ENCODE measurements at regions of chr6 and their contacts with region 1.

Region 1: DNA sequence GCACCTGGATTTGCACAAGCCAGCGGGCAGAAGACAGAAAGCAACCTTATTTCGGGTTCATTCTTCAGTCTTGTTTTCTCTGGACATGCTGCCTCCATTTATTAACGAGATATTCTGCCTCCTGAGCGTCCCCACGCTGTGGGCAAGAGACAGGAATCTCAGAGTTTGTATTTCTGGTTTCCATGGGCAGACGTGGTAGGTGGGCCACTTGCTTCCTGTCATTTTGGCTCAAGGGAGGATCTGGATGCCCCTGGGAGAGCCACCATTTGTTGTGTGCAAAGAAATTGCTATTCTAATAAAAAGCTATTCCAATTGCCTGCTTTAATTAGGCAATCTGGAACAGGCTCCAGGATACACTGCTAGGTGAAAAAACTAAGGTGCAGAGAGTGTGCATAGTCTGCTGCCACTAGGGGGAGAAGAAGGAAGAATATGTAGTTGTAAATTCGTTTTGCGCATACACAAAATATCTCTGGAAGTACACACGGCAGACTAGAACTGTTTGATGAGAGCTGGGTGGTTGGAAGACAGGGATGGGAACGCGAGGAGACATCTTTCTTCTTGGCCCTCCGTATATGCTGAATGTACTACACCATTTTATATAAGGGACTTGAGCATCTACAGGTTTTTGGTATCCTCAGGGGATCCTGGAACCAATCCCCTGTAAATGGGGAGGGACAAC is 30.1 kb upstream of the SLC16A10 start:
- H3K4me3 ChIP-seq: no peak overlapping the region
- H3K27ac ChIP-seq: no peak overlapping the region
- H3K4me1 ChIP-seq: no peaks in the 10 kb centered on the region
- CTCF ChIP-seq: peak; percentile 51; the same call in 1 of the 2 replicates

Region 2: DNA sequence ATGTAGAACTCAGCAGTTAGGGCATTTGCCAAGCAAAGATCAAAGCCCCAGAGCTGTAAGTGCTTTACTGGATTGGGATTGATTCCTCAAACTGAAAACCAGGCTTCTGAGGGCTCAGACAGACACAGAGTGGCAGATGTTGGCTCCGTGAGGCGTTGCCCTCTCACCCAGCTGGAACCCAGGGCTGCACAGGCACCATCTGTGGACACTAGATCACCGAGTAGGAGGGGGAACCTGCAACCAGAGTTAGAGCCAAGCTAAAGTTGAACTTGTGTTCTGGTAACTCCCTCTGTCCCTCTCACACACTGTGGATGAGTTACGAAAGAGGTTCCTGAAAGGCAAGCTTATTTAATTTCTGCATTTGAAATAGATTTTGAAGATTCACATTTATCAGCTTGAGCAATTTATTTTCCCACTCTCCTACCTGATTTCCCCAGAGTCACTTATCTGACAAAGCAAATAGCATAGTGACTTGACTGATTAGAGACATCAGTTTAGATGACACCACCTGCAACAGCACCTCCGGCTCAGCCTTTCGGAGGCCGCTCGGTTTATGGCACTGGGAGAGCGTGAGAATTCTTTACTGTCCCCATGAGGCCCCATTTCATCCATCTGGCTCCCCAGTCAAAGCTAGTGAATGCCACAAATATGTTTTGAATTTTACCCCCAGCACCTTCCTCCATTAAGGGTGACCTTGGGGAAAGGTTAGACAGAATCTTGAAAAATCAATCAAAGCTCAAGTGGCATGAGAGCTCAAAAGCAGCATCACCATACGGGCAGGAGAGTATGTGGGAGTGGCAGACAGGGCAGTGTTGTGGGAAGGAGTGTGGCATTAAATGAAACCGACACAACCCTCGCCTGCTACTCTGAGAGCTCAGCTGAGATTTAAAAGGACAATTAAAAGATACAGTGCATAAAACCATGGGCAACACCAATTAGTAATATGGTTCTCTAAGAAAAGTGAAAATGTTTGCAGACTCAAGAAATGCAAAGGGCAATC is 26.9 kb before region 1 on chr6:
- CTCF ChIA-PET with region 1: interaction called, 11 read pairs
- POLR2A ChIA-PET with region 1: no interaction called
- H3K4me3 ChIP-seq: no peak overlapping the region
- H3K27ac ChIP-seq: no peak overlapping the region
- H3K4me1 ChIP-seq: peaks cover 5% of the 10 kb centered on the region
- CTCF ChIP-seq: no peak

Region 3: DNA sequence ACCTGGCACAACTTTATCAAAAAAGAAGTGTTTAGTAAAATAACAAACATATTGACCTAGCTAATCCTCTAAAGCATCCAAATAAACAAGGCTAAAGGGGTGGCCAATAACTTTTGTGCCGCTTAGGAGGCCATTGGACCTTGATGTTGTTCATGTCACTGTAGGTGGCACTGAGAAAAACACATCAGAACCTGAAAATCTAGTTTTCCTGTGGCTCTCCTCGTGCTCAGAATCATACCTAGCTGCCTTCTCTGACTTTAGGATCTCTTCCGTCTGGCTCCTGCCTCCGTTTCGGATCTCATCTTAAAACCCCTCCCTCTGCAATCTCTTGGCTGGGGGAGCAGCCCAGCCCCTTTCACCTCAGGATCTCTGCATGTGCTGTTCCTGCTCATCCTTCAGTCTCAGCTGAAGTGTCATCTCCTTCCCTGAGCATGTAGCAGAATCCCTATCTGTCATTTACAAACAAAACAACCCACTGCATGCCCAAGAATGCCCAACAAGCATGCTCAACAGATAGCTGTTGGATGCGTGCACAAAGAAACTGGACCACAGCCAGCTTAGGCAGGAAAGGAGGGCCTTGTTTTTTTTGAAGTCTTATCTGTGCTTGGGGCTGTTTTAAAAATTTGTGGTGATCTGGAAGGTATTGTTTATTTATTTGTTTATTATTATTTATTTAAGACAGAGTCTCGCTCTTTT is 11.4 kb after region 1 on chr6:
- CTCF ChIA-PET with region 1: interaction called, 37 read pairs
- POLR2A ChIA-PET with region 1: interaction called, 3 read pairs
- H3K4me3 ChIP-seq: no peak overlapping the region
- H3K27ac ChIP-seq: no peak overlapping the region
- H3K4me1 ChIP-seq: peaks cover 2% of the 10 kb centered on the region
- CTCF ChIP-seq: no peak

Region 4: GRCh38 chr6:111200350-111201243 is 143.4 kb after region 1 on chr6:
- CTCF ChIA-PET with region 1: interaction called, 11 read pairs
- POLR2A ChIA-PET with region 1: no interaction called
- H3K4me3 ChIP-seq: no peak overlapping the region
- H3K27ac ChIP-seq: no peak overlapping the region
- H3K4me1 ChIP-seq: peaks cover 8% of the 10 kb centered on the region; the same call in 1 of the 2 replicates
- CTCF ChIP-seq: no peak

Region 5: DNA sequence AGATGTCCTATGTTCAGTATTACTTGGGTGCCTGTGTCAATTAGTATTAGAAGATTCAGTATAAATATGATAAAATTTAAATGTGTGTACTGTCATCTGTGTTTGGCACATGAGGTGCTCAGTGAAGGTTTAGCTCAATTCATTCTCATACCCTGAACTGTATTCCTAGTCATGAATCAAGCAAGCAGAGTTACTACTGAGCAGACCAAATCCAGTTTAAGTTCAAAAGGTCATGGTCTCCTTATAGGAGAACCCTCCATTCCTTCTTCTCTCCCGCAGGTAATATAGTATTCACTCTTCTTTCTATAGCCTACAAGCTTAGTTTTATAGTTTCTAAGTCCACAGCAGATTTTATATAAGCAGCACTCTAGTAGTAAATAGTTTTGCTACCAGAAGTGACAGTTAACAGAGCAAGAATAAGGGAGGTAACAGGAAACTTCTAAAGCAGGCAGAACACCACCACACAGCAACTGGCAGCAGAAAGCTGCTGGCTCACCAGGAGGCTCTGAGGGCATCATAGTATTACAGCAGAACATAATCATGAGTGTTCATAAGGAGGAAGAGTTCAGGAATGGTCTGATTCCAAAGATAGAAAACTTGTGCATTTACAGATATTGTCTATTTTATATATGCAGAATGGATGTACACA is 163.3 kb after region 1 on chr6:
- CTCF ChIA-PET with region 1: interaction called, 10 read pairs
- POLR2A ChIA-PET with region 1: no interaction called
- H3K4me3 ChIP-seq: no peak overlapping the region
- H3K27ac ChIP-seq: no peak overlapping the region
- H3K4me1 ChIP-seq: no peaks in the 10 kb centered on the region
- CTCF ChIP-seq: no peak

Region 6: DNA sequence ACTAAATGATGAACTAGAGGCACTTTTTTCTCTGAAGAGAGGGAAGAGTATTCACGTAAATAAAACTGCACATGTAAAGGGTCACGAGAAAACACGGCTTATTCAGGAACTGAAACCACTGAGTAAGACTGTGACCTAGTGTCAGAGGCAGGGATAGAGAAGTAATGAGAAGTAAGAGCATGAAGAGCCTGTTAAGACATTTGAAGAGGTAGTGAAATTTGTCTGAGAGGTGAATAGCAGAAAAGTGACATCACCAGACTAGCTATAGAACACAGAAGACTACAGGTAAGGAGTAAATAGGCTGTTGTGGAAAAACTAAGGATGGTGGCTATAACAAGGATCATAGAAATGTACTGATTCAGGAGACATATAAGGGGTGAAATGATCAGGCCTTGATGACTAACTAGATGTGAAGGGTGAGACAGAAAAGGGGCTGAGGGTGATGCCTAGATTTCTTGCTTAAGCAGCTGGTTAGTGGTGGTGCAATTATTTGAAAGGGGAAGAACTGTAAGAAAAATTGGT is 349.0 kb after region 1 on chr6:
- CTCF ChIA-PET with region 1: no interaction called
- POLR2A ChIA-PET with region 1: no interaction called
- H3K4me3 ChIP-seq: no peak overlapping the region
- H3K27ac ChIP-seq: no peak overlapping the region
- H3K4me1 ChIP-seq: no peaks in the 10 kb centered on the region
- CTCF ChIP-seq: no peak

Measured in HEK293 (cell line).